Activated CD8-positive, alpha-beta memory T cell treated with anti-CD3 and anti-CD28 coated beads, Interleukin-2, amount 10 ng/mL, durations not matched to agents 7 days and 5 days (primary cell): ENCODE measurements at regions of chr1 and their contacts with region 1.

Region 1: DNA sequence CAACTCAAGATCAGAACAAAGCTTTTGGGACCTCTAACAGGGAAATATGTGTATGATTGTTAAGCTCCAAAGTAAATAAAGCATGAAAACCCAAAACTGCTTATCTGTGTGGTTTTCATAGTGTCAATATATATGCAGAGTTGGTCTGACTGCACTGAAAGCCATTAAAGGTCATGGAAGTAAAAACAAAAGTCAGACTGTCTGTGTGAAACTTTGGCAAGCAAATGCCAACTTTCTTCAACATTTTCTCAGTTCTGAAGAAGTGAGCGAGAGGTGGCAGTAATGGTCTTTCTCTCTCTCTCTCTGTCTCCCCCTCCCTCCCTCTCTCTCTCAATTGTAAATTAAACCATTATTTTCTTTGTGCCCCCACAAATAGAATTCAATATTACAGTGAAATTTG is 100.1 kb upstream of the S1PR1 start:
- DNase-seq: no peak
- ATAC-seq: peak; percentile 82
- H3K4me3 Mint-ChIP-seq: peak overlapping the region; percentile 0
- H3K27ac Mint-ChIP-seq: peak overlapping the region; percentile 65
- H3K4me1 Mint-ChIP-seq: peaks cover 42% of the 10 kb centered on the region
- H3K27me3 Mint-ChIP-seq: no peaks in the 10 kb centered on the region

Region 2: DNA sequence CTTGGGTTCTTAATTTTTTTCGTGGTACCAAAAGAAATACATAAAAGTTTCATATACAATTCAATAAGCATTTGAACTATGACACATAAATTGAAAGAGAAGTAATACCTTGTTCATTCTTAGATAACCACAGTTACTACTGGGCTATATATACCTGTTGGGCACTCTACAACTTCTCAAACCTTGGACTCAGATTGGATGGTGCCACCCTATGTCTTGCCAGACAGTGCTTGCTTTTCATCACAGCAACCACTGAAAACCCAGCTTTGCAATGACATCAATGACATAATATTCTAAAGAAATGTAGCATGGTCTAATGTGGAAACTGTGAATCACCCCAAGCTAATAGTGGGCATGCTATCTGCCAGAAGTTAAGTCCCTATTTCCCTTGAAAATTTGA is 48.3 kb before region 1 on chr1:
- CTCF ChIA-PET with region 1: no interaction called
- DNase-seq: no peak
- ATAC-seq: peak; percentile 23
- H3K4me3 Mint-ChIP-seq: no peak overlapping the region
- H3K27ac Mint-ChIP-seq: peak overlapping the region; percentile 41
- H3K4me1 Mint-ChIP-seq: peaks cover 24% of the 10 kb centered on the region
- H3K27me3 Mint-ChIP-seq: no peaks in the 10 kb centered on the region

Region 3: DNA sequence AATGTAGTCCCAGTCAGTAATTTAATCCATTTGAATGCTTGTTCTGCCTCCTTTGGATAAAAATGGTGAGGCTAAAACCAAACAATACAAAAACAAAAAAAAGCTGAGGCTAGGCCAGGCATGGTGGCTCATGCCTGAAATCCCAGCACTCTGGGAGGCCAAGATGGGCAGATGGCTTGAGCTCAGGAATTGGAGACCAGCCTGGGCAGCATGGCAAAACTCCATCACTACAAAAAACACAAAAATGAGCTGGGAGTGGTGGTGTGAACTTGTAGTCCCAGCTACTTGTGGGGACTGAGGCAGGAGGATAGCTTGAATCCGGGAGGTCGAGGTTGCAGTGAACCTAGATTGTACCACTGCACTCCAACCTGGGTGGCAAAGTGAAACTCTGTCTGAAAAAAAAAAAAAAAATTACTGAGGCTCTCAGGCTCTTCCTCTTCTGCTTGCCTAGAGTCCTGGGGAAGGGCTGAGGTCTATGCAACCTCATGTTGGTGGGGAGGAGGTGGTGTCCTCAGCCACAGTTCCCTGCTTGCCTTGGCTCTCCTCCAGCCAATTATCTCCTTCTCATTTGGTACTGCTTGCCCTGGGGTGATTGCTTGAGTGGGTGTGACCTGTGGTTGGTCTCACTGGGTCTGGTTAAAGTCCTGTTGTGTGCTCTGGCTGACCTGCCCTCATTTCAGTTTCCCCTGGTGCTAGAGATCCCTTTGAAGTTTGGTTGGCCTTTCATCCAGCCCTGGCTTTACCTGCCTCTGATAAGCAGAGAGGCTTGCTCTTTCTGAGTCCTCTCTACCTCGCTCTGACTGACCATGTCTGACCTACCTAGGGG is 121.0 kb after region 1 on chr1:
- CTCF ChIA-PET with region 1: interaction called, 13 read pairs
- DNase-seq: peak; percentile 82
- ATAC-seq: peak; percentile 83
- H3K4me3 Mint-ChIP-seq: peak overlapping the region; percentile 4
- H3K27ac Mint-ChIP-seq: peak overlapping the region; percentile 65
- H3K4me1 Mint-ChIP-seq: peaks cover 56% of the 10 kb centered on the region
- H3K27me3 Mint-ChIP-seq: no peaks in the 10 kb centered on the region